ENCODE measurements at regions of chr5 and their contacts with region 1.

Region 1: GRCh38 chr5:53023969-53024368 is 34.8 kb downstream of the ITGA2 start:
- DNase-seq: peak; percentile 59
- H3K4me3 ChIP-seq: no peak overlapping the region
- CTCF ChIP-seq: no peak

Region 2: DNA sequence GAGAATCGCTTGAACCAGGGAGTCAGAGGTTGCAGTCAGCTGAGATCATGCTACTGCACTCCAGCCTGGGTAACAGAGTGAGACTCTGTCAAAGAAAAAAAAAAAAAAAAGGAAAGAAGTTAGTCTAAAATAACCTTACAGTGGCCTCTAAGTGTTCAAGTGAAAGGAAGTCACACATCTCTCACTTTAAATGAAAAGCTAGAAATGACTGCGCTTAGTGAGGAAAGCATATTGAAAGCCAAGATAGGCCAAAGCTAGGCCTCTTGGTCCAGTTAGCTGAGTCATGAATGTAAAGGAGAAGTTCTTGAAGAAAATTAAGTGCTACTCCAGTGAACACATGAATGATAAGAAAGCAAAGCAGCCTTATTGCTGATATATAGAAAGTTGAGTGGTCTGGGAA is 198.1 kb before region 1 on chr5:
- CTCF ChIA-PET with region 1: no interaction called
- POLR2A ChIA-PET with region 1: no interaction called
- DNase-seq: no peak
- H3K4me3 ChIP-seq: no peak overlapping the region
- CTCF ChIP-seq: no peak

Region 3: GRCh38 chr5:53010814-53011213 is 13.2 kb before region 1 on chr5:
- CTCF ChIA-PET with region 1: interaction called, 10 read pairs
- POLR2A ChIA-PET with region 1: no interaction called
- DNase-seq: no peak
- H3K4me3 ChIP-seq: no peak overlapping the region
- CTCF ChIP-seq: no peak

Region 4: DNA sequence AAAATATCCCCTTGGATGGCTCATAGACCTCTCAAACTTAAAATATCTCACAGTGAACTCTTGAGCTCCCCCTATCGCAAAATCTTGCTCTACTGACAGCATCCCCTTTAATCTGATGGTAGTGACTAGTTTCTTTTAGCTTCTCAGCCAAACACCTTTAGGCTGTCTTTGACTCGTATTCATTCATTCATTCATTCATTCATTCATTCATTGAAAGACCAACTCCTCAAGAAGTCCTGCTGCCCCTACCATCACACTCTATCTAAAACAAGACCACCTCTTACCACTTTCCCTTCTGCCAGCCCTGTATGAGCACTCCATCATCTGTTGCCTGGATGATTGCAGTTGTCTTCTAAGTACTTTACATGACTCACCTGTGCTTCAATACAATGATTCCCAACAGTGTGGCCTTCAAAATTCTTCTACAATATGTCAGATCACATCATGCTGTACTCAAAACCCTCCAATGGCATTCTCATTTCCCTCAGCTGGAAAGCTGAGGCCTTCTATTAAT is 12.0 kb after region 1 on chr5:
- CTCF ChIA-PET with region 1: interaction called, 12 read pairs
- POLR2A ChIA-PET with region 1: no interaction called
- DNase-seq: no peak
- H3K4me3 ChIP-seq: no peak overlapping the region
- CTCF ChIP-seq: peak; percentile 6

Region 5: DNA sequence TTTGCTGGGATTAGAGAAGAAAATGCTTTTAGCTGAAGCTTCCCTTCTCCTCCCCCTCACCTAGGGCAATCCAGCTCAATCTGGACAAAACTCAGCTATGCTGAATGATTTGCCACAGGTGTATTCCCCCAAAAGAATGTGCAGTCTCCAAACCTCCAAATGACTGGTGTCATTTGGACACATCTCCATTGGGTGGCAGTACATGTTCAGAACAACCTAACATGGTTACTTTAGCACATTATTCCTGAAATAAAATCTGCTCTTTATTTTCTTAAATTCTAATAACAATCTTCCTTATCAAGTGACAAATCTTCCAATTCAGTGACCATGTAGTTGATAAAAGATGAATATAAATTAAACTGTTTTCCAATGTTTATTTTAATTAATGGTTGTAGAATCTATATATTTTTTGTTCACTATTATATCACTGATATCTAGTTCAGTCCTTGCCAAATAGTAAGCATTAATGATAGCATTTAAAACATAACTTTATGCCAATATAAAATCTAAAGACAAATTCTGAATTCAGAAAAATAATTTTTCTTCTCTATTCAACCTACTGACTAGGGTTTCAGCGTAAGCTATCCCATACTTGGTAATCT is 146.9 kb after region 1 on chr5:
- CTCF ChIA-PET with region 1: no interaction called
- POLR2A ChIA-PET with region 1: no interaction called
- DNase-seq: no peak
- H3K4me3 ChIP-seq: no peak overlapping the region
- CTCF ChIP-seq: peak; percentile 60